ENCODE measurements at regions of chr15 and their contacts with region 1.

Region 1: GRCh38 chr15:84748274-84749110 is at the start of gene ZNF592:
- DNase-seq: peak; percentile 89 to 93 (median 91)
- ATAC-seq: peak; percentile 72 to 88 (median 78)
- H3K4me3 ChIP-seq: peak within 1 kb of the TSS; percentile 64 to 97 (median 94)
- H3K27ac ChIP-seq: peak within 1 kb of the TSS; percentile 99 to 100 (median 100)
- H3K4me1 ChIP-seq: peaks cover 13 to 72% (median 52%) of the 10 kb centered on the region in 12 donors
- H3K27me3 ChIP-seq: no peaks in the 10 kb centered on the region
- CTCF ChIP-seq: peak in 5 of 12 donors; percentile 13 to 62 (median 35)
- POLR2A ChIP-seq: no peak
- total RNA-seq, gene ZNF592: 16.8 to 28.6 (median 21.4) TPM

Region 2: DNA sequence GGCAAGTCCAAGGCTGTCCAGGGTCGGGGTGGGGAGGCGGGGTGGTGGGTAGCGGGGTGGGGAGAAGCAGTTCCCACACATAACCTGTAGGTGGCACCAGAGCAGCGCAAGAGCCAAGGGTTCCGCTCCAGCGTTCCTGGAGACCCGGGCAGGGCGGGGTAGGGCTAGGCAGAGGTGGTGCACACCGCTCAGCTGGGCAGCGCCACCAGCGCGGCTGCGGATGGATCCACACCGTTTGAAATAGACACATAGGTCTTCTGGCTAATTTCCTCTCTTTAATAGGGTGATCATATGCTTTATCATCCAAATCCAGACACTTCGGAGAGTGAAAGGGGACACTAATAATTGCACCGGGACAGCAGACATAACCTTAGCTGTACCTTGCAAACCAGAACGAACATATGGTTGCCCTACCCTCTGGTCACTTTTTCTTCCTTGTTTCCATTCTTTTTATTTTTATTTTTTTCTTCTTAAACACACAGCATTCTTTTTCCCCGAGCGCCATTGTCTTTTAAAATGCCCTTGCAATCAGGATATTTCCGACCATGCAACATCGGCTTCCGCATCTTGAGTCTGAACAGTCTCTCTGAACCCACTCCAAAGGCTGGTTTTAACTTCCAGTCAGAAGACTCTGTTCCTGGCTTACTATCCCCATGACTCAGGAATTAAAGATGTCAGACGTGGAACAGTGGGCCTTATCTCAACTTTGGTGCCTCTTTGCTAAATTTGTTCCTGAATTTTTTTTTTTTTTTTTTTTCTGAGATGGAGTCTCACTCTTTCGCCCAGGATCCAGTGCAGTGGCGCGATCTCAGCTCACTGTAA is 160.2 kb before region 1 on chr15:
- intact Hi-C with region 1: loop called in 1 of 10 experiments (anchors 1 kb)
- DNase-seq: peak; percentile 84 to 92 (median 87)
- ATAC-seq: peak; percentile 98 to 99 (median 99)
- H3K4me3 ChIP-seq: peak overlapping the region in 10 of 12 donors; percentile 25 to 58 (median 44)
- H3K27ac ChIP-seq: no peak overlapping the region
- H3K4me1 ChIP-seq: peaks cover 0 to 10% (median 3%) of the 10 kb centered on the region in 12 donors
- H3K27me3 ChIP-seq: no peaks in the 10 kb centered on the region
- CTCF ChIP-seq: peak; percentile 82 to 98 (median 90)
- POLR2A ChIP-seq: no peak

Region 3: GRCh38 chr15:84685304-84685703 is 63.2 kb before region 1 on chr15:
- intact Hi-C with region 1: no loop called
- DNase-seq: peak in 3 of 5 donors; percentile 10 to 70 (median 68)
- ATAC-seq: peak in 3 of 4 donors; percentile 42 to 97 (median 87)
- H3K4me3 ChIP-seq: no peak overlapping the region
- H3K27ac ChIP-seq: peak overlapping the region in 3 of 12 donors; percentile 6 to 47 (median 17)
- H3K4me1 ChIP-seq: peaks cover 0 to 8% (median 0%) of the 10 kb centered on the region in 12 donors
- H3K27me3 ChIP-seq: no peaks in the 10 kb centered on the region
- CTCF ChIP-seq: no peak
- POLR2A ChIP-seq: no peak

Region 4: DNA sequence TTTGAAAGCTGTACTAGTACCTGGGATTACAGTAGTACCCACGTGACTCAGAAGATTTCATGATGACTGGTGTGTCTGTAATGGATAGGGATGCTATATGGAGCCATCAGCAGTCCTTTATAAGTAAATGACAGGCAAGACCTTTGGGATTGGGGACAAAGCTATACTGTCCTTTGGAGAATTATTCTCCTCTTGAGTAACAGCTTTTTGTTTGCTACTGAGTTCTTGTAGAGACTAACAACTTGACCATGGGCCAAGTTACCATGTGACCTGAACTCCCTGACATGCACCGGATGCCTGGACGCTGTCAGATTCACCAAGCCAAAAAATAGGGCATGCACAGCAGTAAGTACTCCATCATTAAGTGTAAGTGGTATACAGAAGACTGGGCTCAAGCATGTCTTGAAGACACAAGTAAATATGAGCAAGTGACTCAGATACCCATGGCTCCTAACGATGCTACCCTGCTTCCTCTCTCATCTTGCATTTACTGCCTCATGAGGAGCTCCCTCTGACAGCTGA is 45.5 kb before region 1 on chr15:
- intact Hi-C with region 1: loop called in 1 of 10 experiments (anchors 5 kb)
- DNase-seq: peak in 4 of 5 donors; percentile 69 to 73 (median 71)
- ATAC-seq: peak; percentile 76 to 94 (median 91)
- H3K4me3 ChIP-seq: no peak overlapping the region
- H3K27ac ChIP-seq: peak overlapping the region in 7 of 12 donors; percentile 28 to 50 (median 38)
- H3K4me1 ChIP-seq: peaks cover 3 to 60% (median 17%) of the 10 kb centered on the region in 12 donors
- H3K27me3 ChIP-seq: no peaks in the 10 kb centered on the region
- CTCF ChIP-seq: no peak
- POLR2A ChIP-seq: no peak

Region 5: DNA sequence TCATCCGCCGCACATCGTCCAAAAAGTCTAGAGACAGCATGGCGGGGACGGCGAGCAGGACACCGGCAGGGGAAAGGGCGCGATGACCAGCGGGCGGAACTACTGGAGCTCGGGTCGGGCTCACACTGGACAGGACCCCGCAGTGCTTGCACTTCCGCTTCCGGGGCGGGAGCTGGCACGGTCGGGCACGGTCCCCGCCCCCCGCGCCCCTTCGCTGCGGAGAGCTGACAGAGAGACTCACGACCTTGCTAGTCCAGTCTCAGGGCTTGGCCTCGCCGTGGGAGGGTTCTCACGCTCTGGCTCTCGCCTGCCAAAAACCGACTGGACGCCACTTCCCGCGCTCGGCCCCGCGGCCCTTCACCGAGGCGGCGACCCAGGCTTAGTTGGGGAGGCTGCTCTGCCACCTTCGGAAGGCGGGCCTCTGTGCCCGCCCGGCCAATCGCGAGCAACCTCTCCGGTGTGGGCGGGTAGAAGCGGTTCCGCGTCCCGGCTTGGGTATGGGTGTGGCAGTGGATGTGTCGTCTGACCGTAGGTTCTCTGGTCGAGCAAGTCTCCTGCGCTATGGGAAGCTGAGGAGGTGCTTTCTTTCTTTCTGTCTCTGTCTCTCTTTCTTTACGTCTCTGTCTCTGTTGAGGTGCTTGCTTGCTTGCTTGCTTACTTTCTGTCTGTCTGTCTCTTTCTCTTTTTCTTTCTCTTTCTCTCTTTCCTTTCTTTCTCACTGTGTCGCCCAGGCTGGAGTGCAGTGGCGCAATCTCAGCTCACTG is 32.3 kb before region 1 on chr15 and contains the start of gene SEC11A:
- intact Hi-C with region 1: loop called in 5 of 10 experiments (anchors 1 to 2 kb)
- DNase-seq: peak; percentile 95 to 98 (median 96)
- ATAC-seq: peak; percentile 98 to 99 (median 98)
- H3K4me3 ChIP-seq: peak within 1 kb of the TSS; percentile 58 to 98 (median 82)
- H3K27ac ChIP-seq: peak within 1 kb of the TSS; percentile 86 to 99 (median 94)
- H3K4me1 ChIP-seq: peaks cover 8 to 52% (median 25%) of the 10 kb centered on the region in 12 donors
- H3K27me3 ChIP-seq: no peaks in the 10 kb centered on the region
- CTCF ChIP-seq: no peak
- POLR2A ChIP-seq: peak in 1 of 2 donors; percentile 76
- total RNA-seq, gene SEC11A: 55.7 to 95.7 (median 73.0) TPM

Region 6: GRCh38 chr15:84810073-84810840 is 61.8 kb after region 1 on chr15:
- intact Hi-C with region 1: loop called in 6 of 10 experiments (anchors 5 to 10 kb)
- DNase-seq: peak in 1 of 5 donors; percentile 19
- ATAC-seq: peak in 3 of 4 donors; percentile 47 to 62 (median 56)
- H3K4me3 ChIP-seq: no peak overlapping the region
- H3K27ac ChIP-seq: no peak overlapping the region
- H3K4me1 ChIP-seq: peaks cover 0 to 11% (median 5%) of the 10 kb centered on the region in 12 donors
- H3K27me3 ChIP-seq: no peaks in the 10 kb centered on the region
- CTCF ChIP-seq: no peak
- POLR2A ChIP-seq: no peak

Region 7: DNA sequence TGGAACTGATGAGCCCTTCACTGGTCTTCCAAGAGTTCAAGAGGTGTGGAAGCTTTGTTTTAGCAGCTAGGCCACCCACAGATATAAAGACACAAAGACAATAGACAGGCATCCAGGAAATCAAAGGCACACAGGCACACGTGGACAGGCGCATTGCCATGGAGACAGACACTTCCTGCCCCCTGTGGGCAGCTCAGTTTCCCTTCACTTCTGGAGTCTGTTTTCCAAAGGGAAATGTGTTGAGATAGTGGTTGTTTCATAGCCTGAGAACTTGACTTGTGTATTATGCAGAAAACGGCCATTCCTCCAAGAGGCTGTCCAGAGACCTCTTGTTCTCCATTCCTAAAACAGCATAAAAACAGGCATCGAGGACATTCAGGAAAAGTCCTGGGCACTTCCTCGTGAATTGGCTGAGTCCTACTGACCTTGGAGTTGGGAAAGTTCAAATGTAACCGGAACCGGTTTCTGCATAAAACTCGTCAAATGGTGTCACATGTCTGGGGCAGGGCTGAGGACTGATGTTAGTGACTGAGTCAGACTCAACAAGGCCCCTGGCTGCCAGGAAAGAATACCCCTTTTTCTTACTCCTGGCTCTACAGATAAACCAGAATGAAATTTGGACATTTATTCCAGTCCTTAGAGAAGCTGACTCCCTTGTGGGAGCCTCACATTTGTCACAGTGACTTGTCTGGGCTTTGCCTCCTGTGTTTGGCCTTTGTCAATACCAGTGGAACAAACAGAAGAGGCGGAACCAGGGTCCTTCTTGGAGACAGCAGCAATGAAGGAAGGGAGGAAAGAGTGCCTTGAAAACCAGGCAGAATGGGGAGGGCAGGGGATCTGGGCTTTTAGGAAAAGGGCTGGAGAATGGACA is 70.0 kb after region 1 on chr15:
- intact Hi-C with region 1: loop called in 6 of 10 experiments (anchors 5 to 10 kb)
- DNase-seq: peak in 4 of 5 donors; percentile 62 to 77 (median 66)
- ATAC-seq: peak; percentile 3 to 46 (median 24)
- H3K4me3 ChIP-seq: peak overlapping the region; percentile 35 to 93 (median 72)
- H3K27ac ChIP-seq: peak overlapping the region; percentile 93 to 99 (median 96)
- H3K4me1 ChIP-seq: peaks cover 11 to 78% (median 68%) of the 10 kb centered on the region in 12 donors
- H3K27me3 ChIP-seq: no peaks in the 10 kb centered on the region
- CTCF ChIP-seq: peak in 3 of 12 donors; percentile 28 to 35 (median 29)
- POLR2A ChIP-seq: no peak

Measured in heart left ventricle (tissue), 16 donors.